HEK293 (cell line): ENCODE measurements at regions of chr1 and their contacts with region 1.

Region 1: GRCh38 chr1:40531381-40532061 is at the start of gene ZNF684:
- H3K4me3 ChIP-seq: peak within 1 kb of the TSS; percentile 66
- H3K27ac ChIP-seq: peak within 1 kb of the TSS; percentile 38; the same call in 1 of the 2 replicates
- H3K4me1 ChIP-seq: no peaks in the 10 kb centered on the region
- CTCF ChIP-seq: no peak

Region 2: DNA sequence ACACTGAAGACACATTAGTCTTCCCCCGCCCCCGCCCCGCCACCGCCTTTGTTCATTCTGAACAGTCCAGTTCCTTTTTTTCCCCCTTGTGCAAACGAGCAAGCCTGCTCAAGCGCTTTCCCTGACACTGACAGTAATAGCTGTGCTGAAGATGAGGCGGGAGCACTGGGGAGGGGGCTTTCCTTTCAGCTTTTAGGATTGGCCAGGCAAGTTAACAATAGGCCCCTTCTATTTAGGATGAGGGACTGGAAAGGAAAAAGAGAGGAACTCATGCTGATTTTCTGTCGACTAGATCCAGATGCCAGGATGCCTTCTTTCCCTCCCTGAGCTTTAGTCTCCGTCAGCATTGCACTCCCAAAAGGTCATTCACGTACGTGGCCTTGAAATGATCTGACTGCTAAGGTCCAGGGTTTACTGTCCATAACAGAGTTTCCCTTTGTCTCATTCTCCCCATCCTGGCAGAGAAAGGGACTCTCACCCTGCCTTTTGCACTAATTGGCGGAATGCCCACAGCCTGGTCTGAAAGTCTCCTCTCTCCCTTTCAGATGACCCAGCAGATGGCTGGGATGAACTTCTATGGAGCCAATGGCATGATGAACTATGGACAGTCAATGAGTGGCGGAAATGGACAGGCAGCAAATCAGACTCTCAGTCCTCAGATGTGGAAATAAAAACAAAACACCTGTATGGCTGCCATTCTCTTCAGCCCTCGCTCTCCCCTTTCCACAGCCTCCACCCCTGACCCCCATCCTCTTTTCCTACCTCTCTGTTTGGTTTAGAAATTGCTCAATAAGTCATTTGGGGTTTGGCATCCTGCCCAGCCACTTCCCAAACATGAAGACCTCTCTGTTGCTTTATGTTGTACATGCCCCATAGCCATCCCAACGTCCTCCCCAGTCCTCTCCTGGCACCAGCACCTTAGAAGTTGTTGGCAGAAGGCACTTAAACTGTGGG is 109.8 kb before region 1 on chr1:
- CTCF ChIA-PET with region 1: no interaction called
- POLR2A ChIA-PET with region 1: no interaction called
- H3K4me3 ChIP-seq: no peak overlapping the region
- H3K27ac ChIP-seq: no peak overlapping the region
- H3K4me1 ChIP-seq: peaks cover 6% of the 10 kb centered on the region
- CTCF ChIP-seq: no peak

Region 3: DNA sequence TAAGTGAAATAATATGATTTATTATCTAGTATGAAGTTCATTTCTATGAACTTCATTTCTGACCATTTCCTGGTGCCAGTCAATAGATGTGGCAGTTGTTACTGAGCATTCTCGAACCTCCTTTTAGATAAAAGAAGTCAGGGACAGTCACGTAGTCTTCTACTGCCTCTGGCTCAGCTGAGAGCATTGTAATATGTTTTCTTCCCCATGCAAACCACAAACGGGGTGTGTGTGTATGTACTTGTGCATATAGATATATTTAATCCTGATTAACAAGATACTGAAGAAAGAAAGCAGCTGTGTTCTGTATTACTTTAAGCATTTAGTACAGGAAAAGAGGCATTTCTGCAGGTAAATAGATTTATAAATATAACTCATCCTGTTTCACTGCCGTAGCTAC is 21.5 kb after region 1 on chr1:
- CTCF ChIA-PET with region 1: interaction called, 16 read pairs
- POLR2A ChIA-PET with region 1: interaction called, 3 read pairs
- H3K4me3 ChIP-seq: no peak overlapping the region
- H3K27ac ChIP-seq: no peak overlapping the region
- H3K4me1 ChIP-seq: no peaks in the 10 kb centered on the region
- CTCF ChIP-seq: no peak